Calu3 (cell line): ENCODE measurements at regions of chr9 and their contacts with region 1.

Region 1: DNA sequence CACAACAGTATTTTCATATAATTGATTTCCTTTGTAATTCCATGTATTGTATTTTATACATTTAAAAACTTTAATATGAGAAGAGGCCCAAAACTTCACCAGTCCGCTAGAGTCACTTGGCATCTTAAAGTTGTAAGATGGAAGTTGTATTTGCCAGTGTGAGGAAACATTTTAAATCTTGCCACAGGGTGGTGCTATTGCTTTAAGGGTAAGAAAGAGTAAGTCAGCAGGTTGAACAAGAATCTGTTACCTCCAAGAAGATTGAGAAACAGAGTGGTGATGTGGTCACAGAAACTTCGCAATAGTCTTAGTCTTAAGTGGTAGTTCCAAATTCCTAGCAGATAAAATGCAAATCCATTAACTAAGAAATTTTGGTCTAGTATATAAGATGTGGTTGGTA is 39.8 kb upstream of the RANBP6 start:
- DNase-seq: peak; percentile 66
- H3K4me3 Mint-ChIP-seq: no peak overlapping the region
- H3K27ac Mint-ChIP-seq: no peak overlapping the region
- H3K4me1 Mint-ChIP-seq: peaks cover 9% of the 10 kb centered on the region
- H3K27me3 Mint-ChIP-seq: no peaks in the 10 kb centered on the region
- CTCF ChIP-seq: peak; percentile 56

Region 2: GRCh38 chr9:5799314-5799713 is 255.9 kb before region 1 on chr9:
- CTCF ChIA-PET with region 1: interaction called, 20 read pairs
- intact Hi-C with region 1: loop called (anchors 5 kb)
- DNase-seq: peak; percentile 12
- H3K4me3 Mint-ChIP-seq: no peak overlapping the region
- H3K27ac Mint-ChIP-seq: no peak overlapping the region
- H3K4me1 Mint-ChIP-seq: no peaks in the 10 kb centered on the region
- H3K27me3 Mint-ChIP-seq: no peaks in the 10 kb centered on the region
- CTCF ChIP-seq: peak; percentile 39

Region 3: DNA sequence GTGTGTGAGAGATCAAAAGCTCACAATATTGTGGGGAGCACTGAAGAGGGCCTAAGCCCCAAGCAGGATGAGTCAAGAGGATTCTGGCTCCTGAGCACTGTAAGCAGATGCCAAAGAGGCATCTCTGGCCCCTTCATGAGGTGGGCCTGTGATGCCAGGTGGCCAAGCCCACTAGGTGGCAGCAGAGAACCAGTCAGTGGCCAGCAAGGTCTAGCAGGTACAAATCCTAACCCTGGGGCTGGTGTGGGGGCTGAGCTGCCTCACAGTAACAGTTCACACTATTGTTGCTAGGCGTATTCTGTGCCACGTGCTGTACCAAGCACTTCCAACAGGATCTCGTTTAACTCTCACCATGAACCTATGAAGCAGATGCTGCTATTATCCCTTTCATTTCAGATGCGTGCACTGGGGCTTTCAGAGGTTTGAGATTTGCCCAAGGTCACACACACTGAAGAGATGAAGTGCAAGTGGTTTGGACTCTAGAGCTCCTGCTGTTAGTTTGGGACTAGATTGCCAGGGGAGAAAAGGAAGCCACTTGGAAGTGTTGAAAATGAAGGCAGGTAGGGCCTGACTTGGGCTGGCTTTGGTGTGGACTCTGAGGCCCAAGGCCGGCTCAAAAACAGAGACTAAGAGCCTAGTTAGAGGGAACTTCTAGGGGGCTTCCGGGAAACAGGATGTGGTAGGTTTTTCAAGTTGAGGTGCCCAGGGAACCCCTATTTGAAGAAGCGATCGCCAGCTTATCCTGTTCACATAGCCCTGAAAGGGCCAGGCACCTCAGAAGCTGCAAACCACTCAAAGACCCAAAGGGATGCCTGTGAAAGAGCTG is 168.9 kb before region 1 on chr9:
- CTCF ChIA-PET with region 1: interaction called, 12 read pairs
- intact Hi-C with region 1: loop called (anchors 2 kb)
- DNase-seq: peak; percentile 82
- H3K4me3 Mint-ChIP-seq: no peak overlapping the region
- H3K27ac Mint-ChIP-seq: no peak overlapping the region
- H3K4me1 Mint-ChIP-seq: peaks cover 9% of the 10 kb centered on the region
- H3K27me3 Mint-ChIP-seq: no peaks in the 10 kb centered on the region
- CTCF ChIP-seq: peak; percentile 82

Region 4: DNA sequence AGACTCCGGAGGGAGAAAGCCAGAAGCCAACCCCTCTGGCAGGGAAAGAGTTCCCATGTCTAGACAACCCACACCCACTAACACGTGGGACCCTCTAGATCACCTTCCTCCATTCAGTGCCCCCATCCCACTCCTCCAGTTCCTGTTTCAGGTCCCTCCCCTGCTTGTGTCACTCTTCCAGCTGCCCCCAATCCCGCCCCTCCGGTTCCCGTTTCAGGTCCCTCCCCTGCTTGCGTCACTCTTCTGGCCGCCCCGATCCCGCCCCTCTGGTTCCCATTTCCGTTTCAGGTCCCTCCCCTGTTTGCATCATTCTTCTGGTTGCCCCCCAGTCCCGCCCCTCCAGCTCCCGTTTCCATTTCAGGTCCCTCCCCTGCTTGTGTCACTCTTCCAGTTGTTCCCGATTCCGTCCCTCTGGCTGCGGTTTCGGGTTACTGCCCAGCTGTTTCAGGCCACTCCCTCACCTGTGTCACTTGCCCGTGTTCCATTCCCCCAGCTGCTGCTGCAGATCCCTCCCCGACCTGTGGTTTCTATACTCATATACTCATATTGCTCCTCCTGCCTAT is 25.0 kb after region 1 on chr9:
- CTCF ChIA-PET with region 1: interaction called, 10 read pairs
- intact Hi-C with region 1: no loop called
- DNase-seq: peak; percentile 89
- H3K4me3 Mint-ChIP-seq: peak overlapping the region; percentile 73
- H3K27ac Mint-ChIP-seq: peak overlapping the region; percentile 86
- H3K4me1 Mint-ChIP-seq: peaks cover 27% of the 10 kb centered on the region
- H3K27me3 Mint-ChIP-seq: no peaks in the 10 kb centered on the region
- CTCF ChIP-seq: no peak

Region 5: GRCh38 chr9:6133346-6134063 is 78.3 kb after region 1 on chr9:
- CTCF ChIA-PET with region 1: no interaction called
- intact Hi-C with region 1: no loop called
- DNase-seq: peak; percentile 52
- H3K4me3 Mint-ChIP-seq: no peak overlapping the region
- H3K27ac Mint-ChIP-seq: no peak overlapping the region
- H3K4me1 Mint-ChIP-seq: peaks cover 23% of the 10 kb centered on the region
- H3K27me3 Mint-ChIP-seq: no peaks in the 10 kb centered on the region
- CTCF ChIP-seq: no peak

Region 6: DNA sequence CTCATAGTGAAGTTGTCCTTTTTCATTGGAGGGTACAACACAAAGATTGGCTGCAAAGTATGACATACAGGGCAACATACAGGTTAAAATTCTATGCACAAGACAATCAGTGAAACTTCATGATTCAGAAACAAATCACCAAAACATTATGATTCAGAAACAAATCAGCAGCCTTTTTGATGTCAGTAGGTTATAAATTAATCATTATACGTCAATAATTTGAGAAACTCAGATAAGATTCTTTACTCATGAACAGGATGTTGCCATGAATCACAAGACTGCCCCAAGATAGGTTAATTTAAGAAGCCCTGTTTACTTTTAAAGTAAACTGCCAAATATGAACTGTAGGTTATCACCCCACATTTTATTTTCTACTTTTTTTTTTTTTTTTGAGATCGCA is 98.2 kb after region 1 on chr9:
- CTCF ChIA-PET with region 1: no interaction called
- intact Hi-C with region 1: loop called (anchors 5 kb)
- DNase-seq: no peak
- H3K4me3 Mint-ChIP-seq: peak overlapping the region; percentile 46
- H3K27ac Mint-ChIP-seq: peak overlapping the region; percentile 88
- H3K4me1 Mint-ChIP-seq: peaks cover 40% of the 10 kb centered on the region
- H3K27me3 Mint-ChIP-seq: no peaks in the 10 kb centered on the region
- CTCF ChIP-seq: no peak

Region 7: GRCh38 chr9:6305954-6306563 is 250.8 kb after region 1 on chr9:
- CTCF ChIA-PET with region 1: interaction called, 43 read pairs
- intact Hi-C with region 1: loop called (anchors 1 kb)
- DNase-seq: no peak
- H3K4me3 Mint-ChIP-seq: no peak overlapping the region
- H3K27ac Mint-ChIP-seq: no peak overlapping the region
- H3K4me1 Mint-ChIP-seq: peaks cover 8% of the 10 kb centered on the region
- H3K27me3 Mint-ChIP-seq: no peaks in the 10 kb centered on the region
- CTCF ChIP-seq: peak; percentile 23